Activated CD8-positive, alpha-beta T cell treated with anti-CD3 and anti-CD28 coated beads for 36 hours (primary cell): ENCODE measurements at regions of chr15 and their contacts with region 1.

Region 1: GRCh38 chr15:48109856-48110531 is 10.8 kb upstream of the SLC24A5 start:
- DNase-seq: no peak
- ATAC-seq: no peak
- H3K4me3 Mint-ChIP-seq: no peak overlapping the region
- H3K27ac Mint-ChIP-seq: no peak overlapping the region
- H3K4me1 Mint-ChIP-seq: no peaks in the 10 kb centered on the region
- H3K27me3 Mint-ChIP-seq: peaks cover 17% of the 10 kb centered on the region
- CTCF ChIP-seq: no peak

Region 2: DNA sequence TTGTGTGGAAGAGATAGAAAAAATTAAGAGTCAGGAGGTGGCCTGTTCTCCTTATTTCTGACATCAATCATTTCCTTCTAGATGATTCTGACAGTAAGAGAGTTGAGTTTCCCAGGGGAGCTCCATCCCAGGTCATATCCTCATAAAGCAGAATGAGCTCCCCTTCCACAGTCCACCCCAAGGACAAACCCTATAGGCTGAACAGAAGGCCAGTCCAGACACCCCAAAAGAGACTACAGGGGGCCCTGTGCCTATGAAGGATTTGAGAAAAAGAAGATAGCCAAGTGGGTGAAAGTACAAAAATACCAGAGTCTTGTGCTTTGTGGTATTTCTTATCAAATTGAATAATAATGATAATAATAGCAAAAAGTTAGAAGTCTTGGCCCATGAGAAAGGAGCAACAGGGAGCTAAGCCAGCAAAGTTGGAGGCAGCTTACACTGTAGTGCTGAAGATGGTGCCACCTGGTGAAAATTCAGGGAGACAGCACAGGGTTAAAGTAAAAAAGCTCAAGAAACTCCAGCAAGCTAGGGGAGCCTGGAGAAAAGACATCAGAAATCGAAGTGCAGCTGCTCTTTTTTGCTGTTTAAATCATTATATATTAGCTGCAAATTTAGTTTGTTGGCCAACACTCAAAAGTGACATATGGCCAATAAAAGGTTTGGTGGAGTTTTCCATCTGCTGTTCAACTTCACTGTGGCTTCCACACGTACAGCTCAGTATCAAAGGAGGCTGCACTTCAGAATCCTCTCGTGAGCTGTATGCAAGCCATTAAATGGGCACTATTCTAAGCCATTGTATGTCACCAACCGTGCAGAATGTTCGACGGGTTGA is 25.0 kb before region 1 on chr15:
- CTCF ChIA-PET with region 1: no interaction called
- POLR2A ChIA-PET with region 1: no interaction called
- intact Hi-C with region 1: no loop called
- DNase-seq: no peak
- ATAC-seq: no peak
- H3K4me3 Mint-ChIP-seq: no peak overlapping the region
- H3K27ac Mint-ChIP-seq: no peak overlapping the region
- H3K4me1 Mint-ChIP-seq: no peaks in the 10 kb centered on the region
- H3K27me3 Mint-ChIP-seq: no peaks in the 10 kb centered on the region
- CTCF ChIP-seq: no peak

Region 3: GRCh38 chr15:48132874-48133273 is 22.9 kb after region 1 on chr15:
- CTCF ChIA-PET with region 1: no interaction called
- POLR2A ChIA-PET with region 1: no interaction called
- intact Hi-C with region 1: no loop called
- DNase-seq: no peak
- ATAC-seq: no peak
- H3K4me3 Mint-ChIP-seq: no peak overlapping the region
- H3K27ac Mint-ChIP-seq: no peak overlapping the region
- H3K4me1 Mint-ChIP-seq: no peaks in the 10 kb centered on the region
- H3K27me3 Mint-ChIP-seq: no peaks in the 10 kb centered on the region
- CTCF ChIP-seq: no peak

Region 4: DNA sequence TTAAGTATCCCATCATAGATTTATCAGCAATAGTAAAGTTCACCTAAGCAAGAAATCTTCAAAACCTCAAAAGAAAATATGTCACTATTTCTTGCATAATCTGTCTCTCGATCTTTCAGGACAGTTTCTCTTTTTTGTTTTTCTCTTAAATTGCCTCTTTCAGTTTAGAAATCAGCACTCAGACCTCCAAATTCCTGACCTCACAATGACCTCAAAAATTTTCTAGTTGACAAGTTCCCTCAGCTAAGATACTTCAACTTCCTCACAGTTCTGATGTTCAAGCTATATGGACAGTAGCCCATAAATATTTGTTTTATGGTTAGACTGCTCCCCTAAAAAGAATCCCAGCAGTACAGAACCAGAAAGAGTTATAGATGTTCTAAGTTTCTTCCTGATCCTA is 34.9 kb after region 1 on chr15:
- CTCF ChIA-PET with region 1: no interaction called
- POLR2A ChIA-PET with region 1: no interaction called
- intact Hi-C with region 1: no loop called
- DNase-seq: no peak
- ATAC-seq: no peak
- H3K4me3 Mint-ChIP-seq: no peak overlapping the region
- H3K27ac Mint-ChIP-seq: no peak overlapping the region
- H3K4me1 Mint-ChIP-seq: no peaks in the 10 kb centered on the region
- H3K27me3 Mint-ChIP-seq: no peaks in the 10 kb centered on the region
- CTCF ChIP-seq: no peak

Region 5: DNA sequence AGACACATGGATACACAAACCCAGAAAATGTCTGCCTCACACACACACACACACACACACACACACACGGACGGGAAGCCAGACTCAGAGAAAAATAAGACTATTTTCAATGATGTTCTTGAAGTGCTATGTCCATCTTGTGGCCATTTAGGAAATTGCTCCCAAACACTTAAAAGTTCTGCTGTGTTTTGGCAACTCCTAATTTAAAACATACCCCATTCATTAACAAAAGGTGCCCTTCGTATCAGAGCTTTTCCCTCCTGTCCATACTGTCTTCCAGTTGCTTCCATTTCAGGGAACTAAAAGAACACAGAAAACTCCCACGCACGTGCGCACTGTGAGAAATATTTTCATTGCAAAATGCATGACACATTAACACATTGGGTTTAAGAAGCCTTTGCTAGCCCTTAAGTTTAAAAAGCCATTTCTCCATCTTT is 140.7 kb after region 1 on chr15:
- CTCF ChIA-PET with region 1: no interaction called
- POLR2A ChIA-PET with region 1: no interaction called
- intact Hi-C with region 1: loop called (anchors 10 kb)
- DNase-seq: peak; percentile 43
- ATAC-seq: no peak
- H3K4me3 Mint-ChIP-seq: no peak overlapping the region
- H3K27ac Mint-ChIP-seq: no peak overlapping the region
- H3K4me1 Mint-ChIP-seq: no peaks in the 10 kb centered on the region
- H3K27me3 Mint-ChIP-seq: peaks cover 5% of the 10 kb centered on the region
- CTCF ChIP-seq: peak; percentile 66

Region 6: DNA sequence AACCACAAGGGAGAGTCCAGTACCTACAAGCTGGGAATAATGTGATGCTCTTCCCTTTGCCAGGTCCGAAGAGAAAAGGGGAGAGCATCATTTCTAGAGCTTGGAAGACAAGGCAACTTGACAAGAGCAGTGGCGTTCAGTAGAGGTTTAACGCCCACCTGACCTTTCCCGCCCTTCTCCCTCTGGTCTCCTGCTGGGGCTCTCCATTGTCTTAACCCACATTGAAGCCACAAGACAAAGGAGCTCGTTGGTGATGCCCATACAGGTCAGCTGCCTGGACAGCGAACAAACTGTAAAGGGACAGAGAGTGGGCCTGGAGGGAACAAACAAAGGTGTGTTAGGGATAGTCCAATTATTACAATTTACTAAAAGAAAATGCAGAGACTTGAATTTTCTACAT is 208.1 kb after region 1 on chr15:
- CTCF ChIA-PET with region 1: no interaction called
- POLR2A ChIA-PET with region 1: no interaction called
- intact Hi-C with region 1: no loop called
- DNase-seq: no peak
- ATAC-seq: no peak
- H3K4me3 Mint-ChIP-seq: no peak overlapping the region
- H3K27ac Mint-ChIP-seq: no peak overlapping the region
- H3K4me1 Mint-ChIP-seq: no peaks in the 10 kb centered on the region
- H3K27me3 Mint-ChIP-seq: peaks cover 1% of the 10 kb centered on the region
- CTCF ChIP-seq: no peak